GM12878 (cell line): ENCODE measurements at regions of chr17 and their contacts with region 1.

Region 1: DNA sequence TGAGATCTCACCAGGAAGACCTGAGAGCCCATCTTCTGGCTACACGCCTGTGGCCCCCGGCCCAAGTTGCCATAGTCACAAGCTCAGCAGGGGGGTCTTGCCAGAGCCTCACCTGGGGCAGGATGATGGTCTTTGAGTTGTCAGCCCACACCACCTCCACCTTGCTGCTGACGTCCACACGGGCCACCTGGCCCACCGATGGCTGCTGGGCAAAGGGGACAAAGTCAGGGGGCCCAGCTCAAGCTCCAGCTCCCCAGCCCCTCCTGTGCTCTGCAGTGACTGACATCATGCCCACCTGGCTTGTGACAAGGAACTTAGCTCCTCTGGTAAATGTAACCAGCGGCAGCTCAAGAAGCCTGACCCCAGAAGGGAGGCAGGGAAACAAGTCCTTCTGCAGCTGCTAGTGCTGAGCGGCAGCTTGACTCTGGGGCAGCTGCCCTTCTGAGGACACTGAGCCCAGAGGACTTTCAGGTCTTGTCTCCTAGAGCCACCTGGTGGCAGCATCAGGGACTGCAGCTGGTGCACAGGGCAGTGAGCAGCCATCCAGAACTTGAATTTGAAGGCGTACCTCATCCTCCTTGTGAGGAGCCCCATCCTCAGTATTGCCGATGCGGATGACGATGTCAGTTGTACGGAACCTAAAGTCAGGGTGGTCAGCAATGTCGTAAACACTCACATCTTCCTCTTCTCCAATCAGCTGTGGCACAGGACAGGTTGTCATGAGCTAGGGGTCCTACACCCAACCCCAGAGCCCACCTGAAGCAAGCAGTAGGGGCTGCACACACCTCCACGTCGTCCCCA is 13.5 kb downstream of the SPHK1 start:
- DNase-seq: peak; percentile 30
- ATAC-seq: peak; percentile 98
- H3K4me3 ChIP-seq: no peak overlapping the region
- H3K27ac ChIP-seq: no peak overlapping the region
- H3K4me1 ChIP-seq: no peaks in the 10 kb centered on the region
- H3K27me3 ChIP-seq: no peaks in the 10 kb centered on the region
- CTCF ChIP-seq: peak; percentile 96 to 98 (median 96); a peak in 5 of 6 replicates
- EP300 ChIP-seq: no peak
- POLR2A ChIP-seq: no peak; the same call in 1 of the 2 replicates
- RAD21 ChIP-seq: peak; percentile 76

Region 2: DNA sequence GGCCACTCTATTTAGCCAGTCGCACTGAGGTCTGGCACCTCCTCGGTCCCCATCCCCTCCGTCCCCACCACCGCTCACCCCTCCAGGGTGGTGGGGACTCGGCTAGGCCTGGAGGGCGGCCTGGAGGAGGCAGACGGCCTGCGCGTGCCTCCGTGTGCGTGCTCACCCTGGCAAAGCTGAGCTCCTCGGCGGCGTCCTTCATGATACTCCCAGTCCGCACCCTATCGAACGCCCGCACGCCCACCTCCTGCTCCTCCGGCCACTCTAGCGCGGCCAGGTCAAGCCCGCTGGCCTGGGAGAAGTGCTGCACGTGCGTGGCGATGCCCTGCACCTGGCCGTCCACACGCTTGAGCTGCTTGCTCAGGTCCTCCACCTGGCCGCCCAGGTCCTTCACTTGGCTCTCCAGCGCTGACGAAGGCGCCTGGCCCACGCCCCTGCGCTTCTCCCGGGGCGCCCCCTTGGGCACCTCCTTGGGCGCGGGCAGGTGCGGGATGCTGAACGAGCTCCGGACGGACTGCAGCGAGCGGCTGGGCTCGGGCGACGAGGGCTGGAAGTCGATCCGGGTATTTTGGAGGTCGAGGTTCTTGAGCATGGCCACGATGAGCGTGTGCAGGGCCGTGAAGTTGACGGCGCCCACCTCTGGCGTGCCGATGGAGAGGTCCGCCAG is 90.5 kb before region 1 on chr17:
- CTCF ChIA-PET with region 1: interaction called, 135 read pairs
- POLR2A ChIA-PET with region 1: no interaction called
- RAD21 ChIA-PET with region 1: interaction called, 37 read pairs
- SMC1A ChIA-PET with region 1: interaction called, 31 read pairs
- in situ Hi-C with region 1: loop called (anchors 5 kb)
- intact Hi-C with region 1: loop called (anchors 1 kb)
- DNase-seq: no peak
- ATAC-seq: no peak
- H3K4me3 ChIP-seq: no peak overlapping the region
- H3K27ac ChIP-seq: no peak overlapping the region
- H3K4me1 ChIP-seq: no peaks in the 10 kb centered on the region
- H3K27me3 ChIP-seq: no peaks in the 10 kb centered on the region
- CTCF ChIP-seq: no peak
- EP300 ChIP-seq: no peak
- POLR2A ChIP-seq: no peak
- RAD21 ChIP-seq: no peak

Region 3: DNA sequence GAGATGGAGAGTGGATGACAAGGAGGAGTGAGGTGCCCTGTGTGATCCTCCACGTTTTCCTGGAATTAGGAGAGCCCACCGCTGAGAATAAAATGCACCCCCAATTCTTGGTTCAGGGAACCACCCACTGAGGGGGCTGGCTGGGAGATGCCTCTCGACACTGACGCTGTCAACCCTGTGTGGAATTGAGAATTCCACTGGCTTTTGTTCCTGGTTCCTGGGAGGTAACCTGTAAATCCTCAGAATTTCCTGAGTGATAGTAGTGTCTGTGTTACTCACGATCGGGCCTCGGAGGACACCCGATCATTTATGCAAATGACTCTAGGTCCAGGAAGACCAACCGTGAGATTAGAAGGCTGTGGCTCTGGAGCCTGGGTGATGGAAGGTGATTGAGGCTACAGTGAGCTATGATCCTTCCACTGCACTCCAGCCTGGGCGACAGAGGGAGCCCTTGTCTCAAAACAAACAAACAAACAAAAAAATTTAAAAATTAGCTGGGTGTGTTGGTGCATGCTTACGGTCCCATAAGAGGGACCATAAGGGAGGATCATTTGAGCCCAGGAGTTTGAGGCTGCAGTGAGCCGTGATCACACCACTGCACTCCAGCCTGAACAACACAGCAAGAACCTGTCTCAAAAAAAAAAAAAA is 32.5 kb before region 1 on chr17:
- CTCF ChIA-PET with region 1: interaction called, 17 read pairs
- POLR2A ChIA-PET with region 1: no interaction called
- RAD21 ChIA-PET with region 1: interaction called, 11 read pairs
- SMC1A ChIA-PET with region 1: interaction called, 4 read pairs
- in situ Hi-C with region 1: no loop called
- intact Hi-C with region 1: no loop called
- DNase-seq: no peak
- ATAC-seq: no peak
- H3K4me3 ChIP-seq: no peak overlapping the region
- H3K27ac ChIP-seq: no peak overlapping the region
- H3K4me1 ChIP-seq: no peaks in the 10 kb centered on the region
- H3K27me3 ChIP-seq: no peaks in the 10 kb centered on the region; a peak in 1 of 4 replicates
- CTCF ChIP-seq: peak; percentile 18 to 29 (median 24); a peak in 5 of 6 replicates
- EP300 ChIP-seq: no peak
- POLR2A ChIP-seq: no peak
- RAD21 ChIP-seq: peak; percentile 44; the same call in 1 of the 2 replicates

Region 4: DNA sequence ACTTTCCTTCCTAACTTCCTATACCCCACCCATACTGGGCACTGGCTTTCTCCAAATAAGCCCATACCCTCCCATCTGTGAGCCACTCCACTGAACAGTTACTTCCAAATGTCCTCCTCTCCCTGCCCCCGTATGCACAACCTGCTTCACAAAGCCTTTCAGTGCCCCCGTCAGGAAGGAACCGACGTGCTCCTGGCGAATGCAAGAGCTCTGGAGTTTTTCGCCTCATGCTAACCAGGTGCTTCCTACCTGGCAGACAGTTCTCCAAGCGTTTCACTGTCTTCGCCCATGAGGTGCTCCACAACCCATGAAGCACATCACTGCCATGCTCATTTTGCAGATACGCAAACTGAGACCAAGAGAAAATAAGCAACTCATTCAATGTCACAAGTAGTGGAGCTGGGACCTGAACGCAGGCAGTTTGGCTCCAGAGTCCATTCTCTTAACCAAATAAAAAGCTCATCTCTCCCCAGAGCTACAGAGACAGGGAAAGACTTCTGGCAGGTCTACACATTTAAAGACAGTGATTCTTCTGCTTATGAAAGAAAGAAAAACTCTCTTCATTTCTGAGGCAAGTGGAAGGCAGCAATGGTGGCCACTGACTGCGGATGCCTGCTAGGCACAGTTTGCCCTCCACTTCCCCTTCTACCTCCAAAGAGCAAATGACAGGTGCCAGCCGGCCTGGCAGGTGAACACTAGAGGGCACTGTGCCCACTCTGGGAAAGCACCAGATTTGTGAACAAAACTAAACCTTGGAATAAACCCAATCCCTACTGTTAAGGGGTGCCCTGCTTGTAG is 10.4 kb after region 1 on chr17:
- CTCF ChIA-PET with region 1: interaction called, 17 read pairs
- POLR2A ChIA-PET with region 1: no interaction called
- RAD21 ChIA-PET with region 1: no interaction called
- SMC1A ChIA-PET with region 1: interaction called, 11 read pairs
- in situ Hi-C with region 1: no loop called
- intact Hi-C with region 1: no loop called
- DNase-seq: no peak
- ATAC-seq: peak; percentile 91
- H3K4me3 ChIP-seq: no peak overlapping the region
- H3K27ac ChIP-seq: no peak overlapping the region
- H3K4me1 ChIP-seq: peaks cover 20% of the 10 kb centered on the region
- H3K27me3 ChIP-seq: no peaks in the 10 kb centered on the region
- CTCF ChIP-seq: peak; percentile 87 to 96 (median 91)
- EP300 ChIP-seq: no peak
- POLR2A ChIP-seq: no peak
- RAD21 ChIP-seq: peak; percentile 82

Region 5: DNA sequence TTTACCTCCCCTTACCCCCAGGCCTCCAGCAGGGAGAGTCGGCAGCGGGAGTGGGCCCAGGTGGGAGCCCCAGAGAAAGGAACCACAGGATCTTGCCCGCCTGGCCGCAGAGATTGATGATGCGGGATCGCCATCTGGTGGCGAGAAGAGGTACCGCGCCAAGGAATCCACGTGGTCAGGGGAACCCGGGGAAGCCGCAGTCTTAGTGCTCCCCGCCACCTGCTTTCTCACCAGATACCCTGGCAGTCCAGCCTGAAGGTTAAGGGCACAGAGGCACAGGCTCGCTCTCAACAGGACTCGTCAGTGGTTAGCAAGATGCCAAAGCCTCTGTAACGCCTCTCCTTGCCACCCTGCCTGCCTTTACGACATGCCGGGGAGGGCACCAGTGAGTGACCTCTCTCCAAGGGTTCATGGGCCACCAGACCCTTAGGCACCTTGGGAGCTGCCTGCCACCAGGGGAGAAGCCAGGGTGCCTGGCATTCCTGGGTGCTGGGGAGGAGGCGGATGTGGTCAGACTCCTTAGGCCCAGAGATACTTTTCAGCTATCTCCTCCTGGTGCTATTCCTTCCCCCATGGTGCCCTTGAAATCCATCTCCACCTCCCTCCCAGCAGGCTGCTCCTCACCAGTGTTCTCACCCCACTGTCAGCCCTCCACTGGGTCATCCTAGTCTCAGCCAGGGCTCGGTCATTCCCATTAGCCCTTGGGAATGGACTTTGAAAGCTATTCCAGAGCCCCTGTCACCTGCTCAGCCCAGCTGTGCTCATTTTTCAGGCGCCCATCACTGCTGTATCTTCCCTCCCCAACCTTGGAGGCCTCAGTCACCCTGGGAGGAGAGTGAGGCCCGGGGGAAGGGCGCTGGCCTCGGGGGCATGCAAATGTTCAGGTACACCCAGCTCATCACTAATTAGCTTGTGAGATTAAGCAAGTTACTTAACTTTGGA is 108.8 kb after region 1 on chr17:
- CTCF ChIA-PET with region 1: interaction called, 13 read pairs
- POLR2A ChIA-PET with region 1: interaction called, 3 read pairs
- RAD21 ChIA-PET with region 1: interaction called, 3 read pairs
- SMC1A ChIA-PET with region 1: interaction called, 3 read pairs
- in situ Hi-C with region 1: no loop called
- intact Hi-C with region 1: no loop called
- DNase-seq: peak; percentile 40
- ATAC-seq: peak; percentile 92
- H3K4me3 ChIP-seq: no peak overlapping the region
- H3K27ac ChIP-seq: no peak overlapping the region
- H3K4me1 ChIP-seq: peaks cover 9% of the 10 kb centered on the region
- H3K27me3 ChIP-seq: no peaks in the 10 kb centered on the region; a peak in 1 of 4 replicates
- CTCF ChIP-seq: peak; percentile 89 to 99 (median 92); a peak in 5 of 6 replicates
- EP300 ChIP-seq: no peak
- POLR2A ChIP-seq: no peak
- RAD21 ChIP-seq: peak; percentile 97

Region 6: DNA sequence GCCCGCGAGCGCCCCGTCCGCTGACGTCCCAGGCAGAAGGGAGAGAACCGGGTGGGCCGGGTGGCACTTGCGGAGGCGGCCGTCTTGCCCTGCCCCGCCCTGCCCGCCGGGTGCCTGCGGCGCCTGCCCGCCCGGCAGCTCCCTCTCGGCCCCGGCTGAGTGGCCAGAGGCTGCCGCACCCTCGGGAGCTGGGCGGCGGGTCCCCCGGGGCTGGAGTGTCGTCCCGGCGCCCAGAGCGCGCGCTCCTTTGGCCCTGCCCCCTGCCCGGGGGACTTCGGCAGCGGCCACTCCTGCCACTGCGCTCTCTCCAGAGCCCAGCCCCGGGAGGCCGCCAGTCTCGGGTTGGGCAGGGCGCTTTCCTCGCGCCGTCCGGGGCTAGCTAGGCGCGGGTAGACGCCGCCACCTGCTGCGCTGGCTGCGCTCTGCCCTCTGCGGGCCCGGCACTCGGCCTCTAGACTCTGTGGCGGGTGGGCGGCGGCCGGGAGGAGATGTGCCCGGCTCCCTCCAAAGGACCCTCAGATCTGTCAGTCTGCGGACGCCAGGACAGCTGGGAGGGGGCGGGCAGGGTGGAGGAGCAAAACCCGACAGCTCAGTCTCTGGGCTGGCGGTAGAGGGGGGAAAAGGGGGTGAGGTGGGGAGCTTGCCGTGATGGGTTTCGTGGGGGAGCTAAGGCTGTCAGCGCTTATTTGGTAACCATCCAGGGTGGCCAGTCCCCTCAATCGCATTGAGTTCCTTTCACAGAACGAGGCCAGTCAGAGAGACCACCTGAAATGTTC is 188.1 kb after region 1 on chr17 and contains the start of gene ST6GALNAC2:
- CTCF ChIA-PET with region 1: no interaction called
- POLR2A ChIA-PET with region 1: no interaction called
- RAD21 ChIA-PET with region 1: no interaction called
- SMC1A ChIA-PET with region 1: no interaction called
- in situ Hi-C with region 1: no loop called
- intact Hi-C with region 1: no loop called
- DNase-seq: no peak
- ATAC-seq: peak; percentile 86
- H3K4me3 ChIP-seq: peak within 1 kb of the TSS; percentile 63; the same call in 1 of the 2 replicates
- H3K27ac ChIP-seq: no peak within 1 kb of the TSS
- H3K4me1 ChIP-seq: peaks cover 6% of the 10 kb centered on the region
- H3K27me3 ChIP-seq: peaks cover 3 to 9% of the 10 kb centered on the region in 2 experiments; a peak in 3 of 4 replicates
- CTCF ChIP-seq: peak; percentile 31 to 49 (median 46); a peak in 4 of 6 replicates
- EP300 ChIP-seq: no peak
- POLR2A ChIP-seq: no peak
- RAD21 ChIP-seq: peak; percentile 34; the same call in 1 of the 2 replicates
- polyA plus RNA-seq, gene ST6GALNAC2: not detected